ENCODE measurements at regions of chr15 and their contacts with region 1.

Region 1: DNA sequence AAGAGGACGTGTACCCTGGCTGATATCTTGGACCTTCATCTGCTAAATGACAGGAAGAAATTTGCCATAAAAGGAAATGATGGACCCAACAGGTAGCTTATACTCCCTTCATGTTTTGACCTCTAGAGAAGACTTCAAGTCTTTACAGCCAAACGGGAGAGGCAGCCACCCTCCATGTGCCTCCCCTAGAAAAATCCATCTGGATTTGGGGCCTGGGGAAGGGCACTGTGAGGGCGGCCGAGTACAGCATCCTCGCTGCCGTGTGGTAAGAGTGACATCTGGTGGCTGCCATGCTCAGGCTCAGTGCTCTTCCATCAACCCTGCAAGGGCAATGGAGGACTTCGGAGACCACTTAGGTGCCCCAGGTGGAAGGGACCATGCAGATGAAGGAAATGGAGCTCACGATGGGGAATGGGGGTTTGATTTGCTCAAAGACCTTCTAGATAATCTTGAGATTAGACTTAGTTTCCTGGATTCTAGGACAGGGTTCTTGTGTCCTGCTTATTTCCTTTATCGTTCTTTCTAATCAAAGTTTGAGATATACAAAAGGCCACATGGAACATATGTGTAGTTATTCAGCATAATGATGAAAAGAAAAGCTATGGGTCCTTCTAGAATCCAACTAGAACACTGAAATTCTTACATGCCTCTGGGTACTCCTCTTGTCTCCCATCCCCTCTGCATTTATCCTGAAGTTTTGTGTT is 44.4 kb downstream of the AQP9 start:
- DNase-seq: peak; percentile 20
- H3K4me3 ChIP-seq: no peak overlapping the region
- H3K27ac ChIP-seq: no peak overlapping the region
- H3K27me3 ChIP-seq: peaks cover 22% of the 10 kb centered on the region
- CTCF ChIP-seq: peak; percentile 87

Region 2: DNA sequence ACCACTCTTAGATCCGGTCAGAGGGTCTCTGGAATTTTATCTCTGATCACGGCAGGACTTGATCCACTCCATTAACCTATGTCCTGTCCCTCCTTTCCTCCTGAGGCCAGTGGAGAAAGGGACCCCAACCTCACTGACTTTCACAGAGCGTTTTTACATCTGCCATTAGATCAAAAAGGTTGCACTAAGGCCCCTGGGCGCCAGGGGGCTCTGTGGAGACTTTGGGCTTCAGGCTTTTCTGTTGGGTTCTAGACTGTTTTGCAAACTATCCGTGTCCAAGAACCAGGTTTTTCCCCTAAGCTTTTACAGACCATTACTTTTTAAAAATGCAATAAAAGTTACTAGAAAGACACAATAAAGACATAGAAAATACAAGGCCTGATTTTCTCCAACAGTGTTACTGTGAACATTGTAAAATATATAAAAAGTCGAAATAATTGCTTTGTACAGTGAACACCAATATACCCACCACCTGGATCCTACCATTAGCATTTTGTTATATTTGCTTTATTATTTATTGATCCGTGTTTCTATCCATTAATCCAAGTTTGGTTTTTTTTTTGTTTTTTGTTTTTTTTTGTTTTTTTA is 316.4 kb before region 1 on chr15:
- CTCF ChIA-PET with region 1: interaction called, 17 read pairs
- POLR2A ChIA-PET with region 1: no interaction called
- DNase-seq: no peak
- H3K4me3 ChIP-seq: no peak overlapping the region
- H3K27ac ChIP-seq: no peak overlapping the region
- H3K27me3 ChIP-seq: no peaks in the 10 kb centered on the region
- CTCF ChIP-seq: peak; percentile 81

Region 3: DNA sequence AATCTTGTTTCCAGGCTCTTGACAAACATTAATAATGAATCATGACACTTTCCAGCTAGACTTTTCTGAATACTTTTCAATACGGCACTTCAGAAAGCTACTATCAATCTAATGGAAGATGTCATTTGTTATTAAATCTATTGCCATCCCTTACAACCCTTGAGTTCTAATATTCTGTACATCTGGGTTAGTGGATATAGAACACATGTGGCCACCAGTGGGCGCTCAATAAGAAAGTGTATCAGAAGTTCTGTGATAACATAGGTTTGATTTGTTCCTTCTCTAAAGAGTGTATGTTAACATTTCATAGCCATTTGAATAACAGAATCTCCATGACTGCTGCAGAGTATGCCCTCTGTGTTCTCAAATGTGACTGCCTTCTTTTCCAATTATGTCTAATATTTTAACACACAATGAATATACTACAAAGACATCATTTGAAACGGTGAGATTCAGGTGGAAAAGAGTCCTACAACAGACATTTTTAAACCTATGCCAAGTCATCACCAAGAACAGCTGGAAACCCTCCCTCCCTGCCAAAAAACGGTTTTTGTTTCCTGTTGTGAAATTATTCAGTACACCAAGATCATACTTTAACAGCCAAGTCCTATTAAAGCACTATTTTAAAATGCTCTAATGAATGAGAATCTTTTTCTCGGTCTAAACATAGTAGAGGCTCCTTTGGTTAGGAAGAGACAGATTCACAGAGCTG is 139.3 kb before region 1 on chr15:
- CTCF ChIA-PET with region 1: interaction called, 31 read pairs
- POLR2A ChIA-PET with region 1: no interaction called
- DNase-seq: peak; percentile 4
- H3K4me3 ChIP-seq: no peak overlapping the region
- H3K27ac ChIP-seq: no peak overlapping the region
- H3K27me3 ChIP-seq: peaks cover 3% of the 10 kb centered on the region
- CTCF ChIP-seq: peak; percentile 82

Region 4: GRCh38 chr15:58731756-58732535 is 549.3 kb after region 1 on chr15:
- CTCF ChIA-PET with region 1: no interaction called
- POLR2A ChIA-PET with region 1: no interaction called
- DNase-seq: no peak
- H3K4me3 ChIP-seq: no peak overlapping the region
- H3K27ac ChIP-seq: peak overlapping the region; percentile 33
- H3K27me3 ChIP-seq: no peaks in the 10 kb centered on the region
- CTCF ChIP-seq: no peak

Measured in AG04450 (cell line).